Common myeloid progenitor, CD34-positive (primary cell): ENCODE measurements at regions of chr22 and their contacts with region 1.

Region 1: DNA sequence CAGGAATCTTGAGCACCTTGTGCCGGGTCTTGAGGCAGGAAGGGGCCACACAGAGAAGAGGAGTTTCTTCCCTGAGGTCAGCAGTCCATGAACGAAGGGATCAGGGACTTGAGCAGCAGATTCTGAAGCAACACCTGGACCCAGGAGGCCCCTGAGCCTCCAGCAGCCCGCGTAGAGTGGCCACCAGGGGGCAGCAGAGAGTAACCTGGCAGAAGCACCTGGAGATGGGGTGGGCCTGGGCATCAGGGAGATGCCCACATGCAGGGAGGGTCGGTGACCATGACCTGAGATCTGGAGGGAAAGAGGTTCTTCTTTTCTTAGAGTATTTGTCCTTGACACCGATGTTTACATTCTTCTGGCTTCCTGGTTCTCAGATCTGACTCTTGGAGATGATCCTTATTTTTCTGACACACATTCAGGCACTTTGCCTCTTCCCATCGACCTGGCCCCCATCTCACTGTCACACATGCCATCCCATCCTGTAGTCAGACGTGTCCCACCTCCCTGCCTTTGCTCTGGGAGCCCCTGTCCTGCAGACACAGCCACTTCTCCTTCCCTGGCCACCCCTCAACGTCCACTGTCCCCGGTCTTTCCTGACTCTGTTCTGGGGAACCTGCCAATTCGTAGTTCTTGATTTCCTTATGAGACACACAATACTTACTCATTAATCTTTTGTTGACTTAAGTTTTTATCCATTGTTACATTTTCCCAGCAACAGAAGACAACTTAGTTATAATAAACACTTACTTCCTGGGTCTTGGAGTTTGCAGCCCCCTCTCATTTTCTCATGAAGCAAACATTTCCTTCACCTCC is 66.5 kb downstream of the GGTLC2 start:
- DNase-seq: peak; percentile 50 to 65 (median 54)
- H3K4me3 ChIP-seq: no peak overlapping the region
- H3K27ac ChIP-seq: no peak overlapping the region
- H3K4me1 ChIP-seq: peaks cover 0 to 11% (median 6%) of the 10 kb centered on the region in 4 experiments
- H3K27me3 ChIP-seq: no peaks in the 10 kb centered on the region

Region 2: GRCh38 chr22:22692707-22693530 is 18.0 kb before region 1 on chr22:
- CTCF ChIA-PET with region 1: interaction called, 10 read pairs
- POLR2A ChIA-PET with region 1: no interaction called
- DNase-seq: peak; percentile 19 to 50 (median 47)
- H3K4me3 ChIP-seq: no peak overlapping the region
- H3K27ac ChIP-seq: no peak overlapping the region
- H3K4me1 ChIP-seq: peaks cover 0 to 10% (median 6%) of the 10 kb centered on the region in 4 experiments
- H3K27me3 ChIP-seq: no peaks in the 10 kb centered on the region

Region 3: DNA sequence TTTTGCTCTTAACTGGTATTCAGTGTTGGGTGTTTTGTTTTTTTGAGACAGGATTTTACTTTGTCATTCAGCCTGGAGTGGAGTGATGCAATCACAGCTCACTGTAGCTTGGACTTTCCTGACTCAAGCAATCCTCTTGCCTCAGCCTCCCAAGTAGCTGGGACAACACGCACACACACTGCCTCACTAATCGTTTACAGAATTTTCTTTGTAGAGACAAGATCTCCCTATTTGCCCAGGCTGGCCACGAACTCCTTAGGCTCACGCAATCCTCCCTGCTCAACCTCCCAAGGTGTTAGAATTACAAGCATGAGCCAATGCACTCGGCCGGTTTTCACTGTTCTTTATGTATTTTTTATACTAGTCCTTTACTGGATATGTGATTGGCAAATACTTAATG is 125.7 kb after region 1 on chr22:
- CTCF ChIA-PET with region 1: no interaction called
- POLR2A ChIA-PET with region 1: no interaction called
- DNase-seq: peak in 1 of 3 donors; percentile 31
- H3K4me3 ChIP-seq: no peak overlapping the region
- H3K27ac ChIP-seq: no peak overlapping the region
- H3K4me1 ChIP-seq: peaks cover 3 to 40% (median 10%) of the 10 kb centered on the region in 4 experiments
- H3K27me3 ChIP-seq: no peaks in the 10 kb centered on the region